Heart right ventricle (tissue), 16 donors: ENCODE measurements at regions of chr1 and their contacts with region 1.

Region 1: GRCh38 chr1:26321315-26322041 is 3.7 kb downstream of the CD52 start:
- DNase-seq: peak; percentile 92 to 93
- ATAC-seq: peak; percentile 90 to 93 (median 92)
- H3K4me3 ChIP-seq: no peak overlapping the region
- H3K27ac ChIP-seq: peak overlapping the region in 1 of 10 donors; percentile 11
- H3K4me1 ChIP-seq: peaks cover 0 to 52% (median 21%) of the 10 kb centered on the region in 9 donors
- H3K27me3 ChIP-seq: peaks cover 0 to 5% (median 0%) of the 10 kb centered on the region in 7 donors
- CTCF ChIP-seq: peak; percentile 77 to 93 (median 92)

Region 2: GRCh38 chr1:26111530-26112406 is 209.7 kb before region 1 on chr1 and contains the start of gene PDIK1L:
- intact Hi-C with region 1: loop called in 6 of 10 experiments (anchors 5 to 10 kb)
- DNase-seq: peak; percentile 92 to 95
- ATAC-seq: peak; percentile 92 to 96 (median 95)
- H3K4me3 ChIP-seq: peak within 1 kb of the TSS; percentile 79 to 100 (median 97)
- H3K27ac ChIP-seq: peak within 1 kb of the TSS; percentile 80 to 100 (median 97)
- H3K4me1 ChIP-seq: peaks cover 6 to 44% (median 34%) of the 10 kb centered on the region in 9 donors
- H3K27me3 ChIP-seq: no peaks in the 10 kb centered on the region
- CTCF ChIP-seq: peak in 1 of 9 donors; percentile 8
- total RNA-seq, gene PDIK1L: 3.8 to 8.3 (median 5.7) TPM

Region 3: DNA sequence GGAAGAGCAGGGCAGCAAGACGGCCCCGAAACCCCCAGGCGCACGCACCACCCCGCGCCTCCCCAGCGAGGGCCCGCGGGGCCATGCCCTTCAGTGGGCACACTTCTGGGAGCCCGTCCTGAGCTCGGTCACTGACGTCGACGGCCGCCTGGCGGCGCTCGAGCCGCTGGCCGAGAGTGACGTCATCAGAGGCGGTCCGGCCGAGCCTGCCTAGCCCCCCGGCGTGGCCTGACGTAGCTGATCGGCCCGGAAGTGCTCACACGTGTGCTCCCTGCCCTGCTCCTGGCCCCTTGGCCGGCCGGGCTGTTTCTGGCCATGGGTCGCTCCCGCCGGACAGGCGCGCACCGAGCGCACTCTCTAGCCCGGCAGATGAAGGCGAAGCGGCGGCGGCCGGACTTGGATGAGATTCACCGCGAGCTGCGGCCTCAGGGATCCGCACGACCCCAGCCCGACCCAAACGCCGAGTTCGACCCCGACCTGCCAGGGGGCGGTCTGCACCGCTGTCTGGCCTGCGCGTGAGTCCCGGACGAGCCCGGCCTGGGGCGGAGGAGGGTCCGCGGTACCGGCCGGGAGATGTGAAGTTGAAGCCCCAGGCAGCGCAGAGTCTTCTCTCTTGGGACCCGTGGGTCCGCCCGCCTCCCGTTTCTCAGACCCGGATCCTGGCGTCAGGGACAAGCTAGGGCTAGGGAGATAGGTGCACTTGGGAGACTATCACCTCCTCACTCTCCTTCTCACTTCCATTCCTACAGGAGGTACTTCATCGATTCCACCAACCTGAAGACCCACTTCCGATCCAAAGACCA is 151.6 kb before region 1 on chr1 and contains the start of gene ZNF593:
- intact Hi-C with region 1: loop called in 7 of 10 experiments (anchors 2 to 10 kb)
- DNase-seq: peak; percentile 92 to 94
- ATAC-seq: peak; percentile 96 to 98 (median 97)
- H3K4me3 ChIP-seq: peak within 1 kb of the TSS; percentile 63 to 100 (median 88)
- H3K27ac ChIP-seq: peak within 1 kb of the TSS in 9 of 10 donors; percentile 79 to 89 (median 82)
- H3K4me1 ChIP-seq: peaks cover 5 to 33% (median 16%) of the 10 kb centered on the region in 9 donors
- H3K27me3 ChIP-seq: no peaks in the 10 kb centered on the region
- CTCF ChIP-seq: peak; percentile 80 to 97 (median 91)
- total RNA-seq, gene ZNF593: 10.7 to 26.0 (median 18.3) TPM

Region 4: GRCh38 chr1:26181586-26182382 is 139.7 kb before region 1 on chr1:
- intact Hi-C with region 1: loop called in 3 of 10 experiments (anchors 10 kb)
- DNase-seq: no peak
- ATAC-seq: peak in 5 of 8 donors; percentile 30 to 75 (median 63)
- H3K4me3 ChIP-seq: no peak overlapping the region
- H3K27ac ChIP-seq: no peak overlapping the region
- H3K4me1 ChIP-seq: peaks cover 0 to 8% (median 0%) of the 10 kb centered on the region in 9 donors
- H3K27me3 ChIP-seq: no peaks in the 10 kb centered on the region
- CTCF ChIP-seq: no peak

Region 5: DNA sequence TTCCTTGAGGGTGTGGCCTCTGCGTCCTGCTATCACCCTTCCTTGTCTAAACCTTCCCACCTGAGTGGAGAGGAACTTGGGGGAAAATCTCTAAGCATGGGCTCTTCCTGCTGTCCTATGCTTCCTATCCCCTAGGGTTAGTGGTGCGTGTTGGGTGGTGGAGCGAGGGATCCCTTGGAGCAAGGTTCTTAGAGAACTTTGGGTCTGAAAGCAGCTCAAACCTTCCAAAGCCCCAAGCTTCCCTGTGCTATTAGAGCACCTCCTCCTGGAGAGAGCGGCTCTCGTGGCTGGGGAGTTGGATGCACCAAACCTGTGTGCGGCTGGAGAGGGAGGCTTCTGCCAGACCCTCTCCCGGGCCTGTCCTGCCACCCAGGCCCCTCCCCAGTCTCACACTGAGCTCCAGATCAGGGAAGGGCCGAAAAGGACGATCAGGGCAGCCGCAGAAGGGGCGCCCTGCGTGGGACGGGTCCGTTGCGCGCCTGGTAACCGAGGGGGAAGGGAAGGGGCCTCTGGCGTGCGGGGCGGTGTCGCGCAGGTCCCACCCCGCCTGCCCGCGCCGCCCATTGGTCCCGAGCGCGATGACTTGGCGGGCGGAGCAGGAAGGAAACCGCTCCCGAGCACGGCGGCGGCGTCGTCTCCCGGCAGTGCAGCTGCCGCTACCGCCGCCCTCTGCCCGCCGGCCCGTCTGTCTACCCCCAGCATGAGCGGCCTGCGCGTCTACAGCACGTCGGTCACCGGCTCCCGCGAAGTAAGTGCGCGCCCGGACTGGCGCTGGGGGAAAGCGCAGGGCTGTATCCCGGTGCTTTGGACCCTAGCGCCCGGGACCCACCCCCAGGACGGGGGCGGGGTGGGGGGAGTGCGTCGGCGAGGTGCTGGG is 41.8 kb before region 1 on chr1 and contains the start of gene SH3BGRL3:
- intact Hi-C with region 1: loop called (anchors 1 to 5 kb)
- DNase-seq: peak; percentile 88 to 90
- ATAC-seq: peak; percentile 72 to 90 (median 86)
- H3K4me3 ChIP-seq: peak within 1 kb of the TSS; percentile 58 to 99 (median 82)
- H3K27ac ChIP-seq: peak within 1 kb of the TSS; percentile 86 to 100 (median 95)
- H3K4me1 ChIP-seq: peaks cover 24 to 99% (median 74%) of the 10 kb centered on the region in 9 donors
- H3K27me3 ChIP-seq: no peaks in the 10 kb centered on the region
- CTCF ChIP-seq: peak in 6 of 9 donors; percentile 26 to 67 (median 48)
- total RNA-seq, gene SH3BGRL3: 18.4 to 116 (median 25.2) TPM

Region 6: GRCh38 chr1:26284597-26285360 is 36.7 kb before region 1 on chr1:
- intact Hi-C with region 1: loop called in 4 of 10 experiments (anchors 2 to 5 kb)
- DNase-seq: peak; percentile 68 to 75
- ATAC-seq: peak in 6 of 8 donors; percentile 21 to 55 (median 43)
- H3K4me3 ChIP-seq: peak overlapping the region in 1 of 10 donors; percentile 8
- H3K27ac ChIP-seq: peak overlapping the region in 8 of 10 donors; percentile 33 to 98 (median 60)
- H3K4me1 ChIP-seq: peaks cover 3 to 97% (median 55%) of the 10 kb centered on the region in 9 donors
- H3K27me3 ChIP-seq: no peaks in the 10 kb centered on the region
- CTCF ChIP-seq: peak; percentile 51 to 85 (median 78)

Region 7: DNA sequence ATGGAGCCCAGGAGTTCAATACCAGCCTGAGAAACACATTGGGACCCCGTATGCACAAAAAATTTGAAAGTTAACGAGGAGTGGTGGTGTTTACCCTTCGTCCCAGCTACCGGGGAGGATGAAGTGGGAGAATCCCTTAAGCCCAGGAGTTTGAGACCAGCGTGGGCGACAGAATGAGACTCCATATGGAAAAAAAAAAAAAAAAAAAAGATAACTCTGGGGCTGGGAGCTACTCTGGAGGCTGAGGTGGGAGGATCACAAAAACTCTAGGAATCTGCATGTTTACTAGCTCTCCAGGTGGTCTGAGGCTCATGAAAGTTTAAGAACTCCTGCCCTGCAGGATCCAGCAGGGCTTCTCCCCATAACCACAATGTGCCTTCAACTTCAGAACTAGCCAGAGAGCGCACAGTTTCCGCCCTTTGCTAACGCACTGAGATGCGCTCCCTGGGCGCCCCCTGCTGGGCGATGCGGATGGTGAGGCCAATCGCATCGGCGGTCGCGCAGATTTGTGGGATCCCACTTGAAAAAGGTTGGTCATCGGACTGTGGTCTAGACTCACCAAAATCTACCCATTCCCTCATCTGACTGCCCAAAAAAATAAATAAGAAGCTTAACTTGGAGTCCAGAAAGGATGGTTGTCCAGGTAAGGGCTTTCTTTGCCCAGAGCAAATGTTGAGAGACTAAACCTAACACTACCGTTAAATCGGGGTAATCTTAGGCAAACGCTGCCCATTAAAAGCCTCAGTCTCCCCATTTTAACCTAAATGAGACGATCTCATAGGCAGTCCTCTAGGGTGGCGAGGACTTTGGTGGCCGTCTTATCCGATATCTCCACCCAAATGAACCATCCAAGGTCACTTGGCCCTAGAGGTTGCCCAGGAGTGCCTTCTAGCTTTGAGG is 42.3 kb after region 1 on chr1:
- intact Hi-C with region 1: loop called in 1 of 10 experiments (anchors 1 kb)
- DNase-seq: peak; percentile 75 to 77
- ATAC-seq: peak in 5 of 8 donors; percentile 66 to 86 (median 81)
- H3K4me3 ChIP-seq: no peak overlapping the region
- H3K27ac ChIP-seq: no peak overlapping the region
- H3K4me1 ChIP-seq: peaks cover 0 to 21% (median 10%) of the 10 kb centered on the region in 9 donors
- H3K27me3 ChIP-seq: peaks cover 16 to 89% (median 57%) of the 10 kb centered on the region in 7 donors
- CTCF ChIP-seq: peak; percentile 72 to 96 (median 90)